ENCODE measurements at regions of chr4 and their contacts with region 1.

Region 1: DNA sequence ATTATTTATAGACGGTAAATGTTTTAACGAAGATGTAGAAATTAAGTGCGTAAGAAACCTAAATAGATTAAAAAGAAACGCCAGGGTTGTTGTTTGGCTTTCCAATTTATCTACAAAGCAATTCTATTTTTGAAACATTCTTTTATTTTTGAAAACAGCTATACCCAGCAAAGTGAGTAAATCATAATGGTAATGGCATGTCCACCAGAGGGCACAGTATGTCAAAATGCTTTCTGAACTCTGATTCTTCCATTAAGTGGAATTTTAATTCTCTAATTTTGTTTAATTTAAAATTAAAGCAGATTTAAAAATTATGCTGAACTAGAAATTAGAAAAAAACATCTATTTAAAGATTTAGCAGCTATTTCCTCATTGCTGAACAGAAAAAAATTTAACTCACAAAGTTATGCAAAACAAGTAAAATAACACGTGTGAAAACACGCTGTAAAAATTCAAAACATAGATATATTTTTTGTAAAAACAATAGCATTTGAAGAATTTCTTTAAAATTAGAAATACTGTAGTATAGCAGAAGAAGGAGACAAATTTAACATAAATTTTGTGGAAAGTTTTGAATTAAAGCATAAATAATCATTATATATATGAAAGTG is 26.5 kb downstream of the RASSF6 start:
- DNase-seq: no peak
- H3K4me3 ChIP-seq: no peak overlapping the region
- H3K27ac ChIP-seq: no peak overlapping the region
- H3K4me1 ChIP-seq: peaks cover 2% of the 10 kb centered on the region
- H3K27me3 ChIP-seq: no peaks in the 10 kb centered on the region
- CTCF ChIP-seq: peak in 1 of 3 experiments; percentile 19
- POLR2A ChIP-seq: no peak

Region 2: GRCh38 chr4:73434311-73434710 is 159.4 kb before region 1 on chr4:
- intact Hi-C with region 1: no loop called
- DNase-seq: no peak
- H3K4me3 ChIP-seq: no peak overlapping the region
- H3K27ac ChIP-seq: no peak overlapping the region
- H3K4me1 ChIP-seq: no peaks in the 10 kb centered on the region
- H3K27me3 ChIP-seq: no peaks in the 10 kb centered on the region
- CTCF ChIP-seq: no peak
- POLR2A ChIP-seq: no peak

Region 3: GRCh38 chr4:73573794-73574406 is 19.8 kb before region 1 on chr4:
- intact Hi-C with region 1: loop called (anchors 1 kb)
- DNase-seq: no peak
- H3K4me3 ChIP-seq: no peak overlapping the region
- H3K27ac ChIP-seq: no peak overlapping the region
- H3K4me1 ChIP-seq: no peaks in the 10 kb centered on the region
- H3K27me3 ChIP-seq: no peaks in the 10 kb centered on the region
- CTCF ChIP-seq: peak; percentile 21 to 39 (median 32)
- POLR2A ChIP-seq: no peak

Measured in vagina (tissue), 2 donors.